MCF 10A (cell line): ENCODE measurements at regions of chr12 and their contacts with region 1.

Region 1: GRCh38 chr12:25052196-25052913 is 103.5 kb upstream of the BCAT1 start:
- DNase-seq: no peak
- H3K4me3 Mint-ChIP-seq: no peak overlapping the region
- H3K27ac Mint-ChIP-seq: peak overlapping the region; percentile 49
- H3K4me1 Mint-ChIP-seq: peaks cover 41% of the 10 kb centered on the region
- H3K27me3 Mint-ChIP-seq: no peaks in the 10 kb centered on the region
- CTCF ChIP-seq: no peak

Region 2: DNA sequence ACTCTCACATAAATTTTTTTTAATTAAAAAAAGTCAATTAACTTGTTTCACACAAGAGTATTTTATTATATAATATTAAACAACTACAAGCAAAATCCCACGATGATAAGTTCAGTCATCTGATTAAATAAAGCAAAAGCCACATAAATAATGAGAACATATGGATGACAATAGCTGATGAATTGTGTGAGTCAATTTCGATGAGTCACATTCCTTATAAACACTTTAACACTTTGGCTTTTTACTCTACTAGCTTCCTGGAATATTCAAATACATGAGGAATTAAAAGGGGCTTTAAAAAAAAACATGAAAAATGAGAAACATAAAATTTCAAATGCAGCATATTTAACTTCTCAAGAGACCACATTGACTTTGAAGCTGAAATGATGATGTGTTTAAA is 198.8 kb before region 1 on chr12:
- CTCF ChIA-PET with region 1: no interaction called
- POLR2A ChIA-PET with region 1: no interaction called
- intact Hi-C with region 1: no loop called
- DNase-seq: peak; percentile 46
- H3K4me3 Mint-ChIP-seq: no peak overlapping the region
- H3K27ac Mint-ChIP-seq: no peak overlapping the region
- H3K4me1 Mint-ChIP-seq: peaks cover 18% of the 10 kb centered on the region
- H3K27me3 Mint-ChIP-seq: no peaks in the 10 kb centered on the region
- CTCF ChIP-seq: no peak

Region 3: DNA sequence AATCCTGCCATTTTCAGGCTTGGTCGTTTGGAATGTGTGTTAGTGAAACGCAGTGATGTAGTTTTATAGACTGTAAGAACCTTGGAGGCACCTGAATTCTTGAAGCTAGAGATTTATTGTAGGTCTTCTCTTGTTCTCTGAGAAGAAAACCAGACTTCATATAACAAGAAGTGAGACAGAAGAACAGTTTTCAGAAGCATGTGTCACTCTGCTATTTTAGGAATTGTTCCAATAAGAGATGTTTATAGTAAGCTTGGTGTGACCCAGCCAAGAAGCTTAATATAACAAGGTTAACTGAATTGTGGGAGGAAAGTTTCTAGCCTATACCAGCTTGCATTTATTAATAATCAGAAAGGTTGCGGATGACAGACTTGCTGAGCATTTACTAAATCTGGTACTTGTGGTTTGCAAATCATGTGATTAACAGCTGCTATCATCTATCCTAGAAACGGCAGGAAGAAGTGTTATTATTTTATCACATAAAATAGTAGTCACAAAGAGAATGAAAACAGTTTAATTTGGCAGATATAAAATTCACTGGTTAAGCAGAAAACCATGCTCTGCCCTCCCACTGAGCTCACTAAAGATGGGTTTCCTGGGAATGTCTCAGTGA is 54.3 kb before region 1 on chr12:
- CTCF ChIA-PET with region 1: interaction called, 11 read pairs
- POLR2A ChIA-PET with region 1: interaction called, 43 read pairs
- intact Hi-C with region 1: no loop called
- DNase-seq: peak; percentile 43
- H3K4me3 Mint-ChIP-seq: peak overlapping the region; percentile 17
- H3K27ac Mint-ChIP-seq: peak overlapping the region; percentile 46
- H3K4me1 Mint-ChIP-seq: peaks cover 13% of the 10 kb centered on the region
- H3K27me3 Mint-ChIP-seq: no peaks in the 10 kb centered on the region
- CTCF ChIP-seq: no peak

Region 4: GRCh38 chr12:25041006-25041741 is 11.2 kb before region 1 on chr12:
- CTCF ChIA-PET with region 1: interaction called, 4 read pairs
- POLR2A ChIA-PET with region 1: interaction called, 14 read pairs
- intact Hi-C with region 1: no loop called
- DNase-seq: no peak
- H3K4me3 Mint-ChIP-seq: no peak overlapping the region
- H3K27ac Mint-ChIP-seq: no peak overlapping the region
- H3K4me1 Mint-ChIP-seq: peaks cover 8% of the 10 kb centered on the region
- H3K27me3 Mint-ChIP-seq: no peaks in the 10 kb centered on the region
- CTCF ChIP-seq: no peak

Region 5: DNA sequence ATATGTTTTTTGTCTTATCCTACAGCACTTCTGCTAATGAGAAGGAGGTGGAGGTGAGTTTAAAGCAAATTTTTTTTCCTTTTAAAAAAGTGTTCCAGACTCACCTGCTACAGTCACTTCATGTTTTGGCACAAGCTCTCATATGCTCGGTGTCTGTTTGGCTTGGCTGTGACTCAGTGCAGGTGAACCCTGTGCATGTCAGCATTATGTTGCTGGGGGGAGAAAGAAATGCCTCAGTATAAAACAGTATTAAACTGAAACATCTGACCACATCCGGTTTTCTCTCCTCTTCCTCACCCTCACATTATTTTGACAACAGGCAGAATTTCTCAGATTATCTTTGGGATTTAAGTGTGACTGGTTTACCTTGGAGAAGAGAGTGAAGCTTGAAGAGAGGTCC is 37.4 kb after region 1 on chr12:
- CTCF ChIA-PET with region 1: no interaction called
- POLR2A ChIA-PET with region 1: interaction called, 19 read pairs
- intact Hi-C with region 1: loop called (anchors 5 kb)
- DNase-seq: peak; percentile 49
- H3K4me3 Mint-ChIP-seq: no peak overlapping the region
- H3K27ac Mint-ChIP-seq: peak overlapping the region; percentile 71
- H3K4me1 Mint-ChIP-seq: peaks cover 15% of the 10 kb centered on the region
- H3K27me3 Mint-ChIP-seq: no peaks in the 10 kb centered on the region
- CTCF ChIP-seq: no peak